MCF 10A (cell line): ENCODE measurements at regions of chr11 and their contacts with region 1.

Region 1: GRCh38 chr11:72179804-72180396 is 12.0 kb upstream of the FOLR1 start:
- DNase-seq: no peak
- H3K4me3 Mint-ChIP-seq: no peak overlapping the region
- H3K27ac Mint-ChIP-seq: peak overlapping the region; percentile 44
- H3K4me1 Mint-ChIP-seq: peaks cover 22% of the 10 kb centered on the region
- H3K27me3 Mint-ChIP-seq: no peaks in the 10 kb centered on the region
- CTCF ChIP-seq: no peak

Region 2: GRCh38 chr11:71977743-71978418 is 202.0 kb before region 1 on chr11:
- CTCF ChIA-PET with region 1: interaction called, 38 read pairs
- POLR2A ChIA-PET with region 1: no interaction called
- intact Hi-C with region 1: loop called (anchors 1 kb)
- DNase-seq: peak; percentile 66
- H3K4me3 Mint-ChIP-seq: no peak overlapping the region
- H3K27ac Mint-ChIP-seq: no peak overlapping the region
- H3K4me1 Mint-ChIP-seq: no peaks in the 10 kb centered on the region
- H3K27me3 Mint-ChIP-seq: no peaks in the 10 kb centered on the region
- CTCF ChIP-seq: peak; percentile 67

Region 3: DNA sequence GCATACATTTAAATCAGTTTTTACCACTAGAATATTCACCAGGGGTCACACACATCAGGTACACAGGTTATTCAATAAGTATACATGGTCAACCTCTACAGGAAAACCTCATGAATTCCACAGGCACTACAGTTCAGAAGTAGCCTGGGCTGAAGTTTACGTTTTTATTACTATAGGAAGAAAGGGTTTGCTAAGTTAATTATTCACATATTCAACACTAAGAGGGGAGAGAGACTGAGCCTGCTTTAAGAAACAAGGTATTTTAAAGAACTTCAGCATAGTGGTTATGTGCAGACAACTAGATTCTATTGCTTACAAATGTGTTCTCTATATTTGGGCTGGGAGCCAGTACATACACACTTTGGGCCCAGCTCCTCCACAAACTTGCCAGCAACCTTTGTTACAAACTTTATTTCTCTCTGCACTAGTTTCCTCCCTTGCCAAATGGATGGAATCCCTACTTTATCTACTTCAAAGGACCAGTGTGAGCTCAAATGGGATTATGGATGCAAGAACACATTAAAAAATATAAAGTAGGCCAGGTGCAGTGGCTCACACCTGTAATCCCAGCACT is 149.3 kb before region 1 on chr11:
- CTCF ChIA-PET with region 1: interaction called, 48 read pairs
- POLR2A ChIA-PET with region 1: interaction called, 14 read pairs
- intact Hi-C with region 1: loop called (anchors 1 kb)
- DNase-seq: no peak
- H3K4me3 Mint-ChIP-seq: no peak overlapping the region
- H3K27ac Mint-ChIP-seq: peak overlapping the region; percentile 27
- H3K4me1 Mint-ChIP-seq: peaks cover under 1% of the 10 kb centered on the region
- H3K27me3 Mint-ChIP-seq: no peaks in the 10 kb centered on the region
- CTCF ChIP-seq: no peak

Region 4: DNA sequence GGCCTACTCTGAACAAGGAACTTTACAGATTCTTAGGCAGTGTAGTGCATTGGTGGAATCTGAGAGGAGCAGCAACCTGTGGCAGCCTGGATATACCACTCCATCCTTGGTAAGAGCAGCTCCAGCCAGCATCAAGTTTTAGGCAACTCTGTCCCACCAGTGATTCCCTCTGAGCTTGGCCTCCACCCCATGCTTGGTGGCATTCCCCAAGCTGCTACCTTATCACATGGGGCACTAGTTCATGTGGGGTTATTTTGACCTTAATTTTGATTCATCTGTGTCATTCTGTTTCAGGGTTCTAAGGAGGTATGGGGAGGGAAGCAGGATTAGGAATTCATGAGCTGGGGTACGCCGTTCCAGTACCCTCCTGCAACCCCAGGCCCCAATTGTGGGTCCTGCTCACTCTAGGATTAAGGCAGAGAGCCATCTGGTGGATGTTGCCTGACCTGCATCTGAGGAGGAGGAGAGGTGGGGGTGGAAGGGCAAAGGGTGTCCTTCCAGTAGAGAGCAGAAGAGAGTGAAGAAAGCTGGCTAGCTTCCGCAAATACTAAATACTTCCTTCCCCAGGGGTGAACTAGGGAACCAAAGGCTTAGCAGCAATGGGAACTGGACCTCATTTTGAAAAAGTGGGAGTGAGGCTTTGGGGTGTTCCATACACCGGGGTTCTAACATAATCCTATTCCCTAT is 88.8 kb before region 1 on chr11:
- CTCF ChIA-PET with region 1: interaction called, 58 read pairs
- POLR2A ChIA-PET with region 1: interaction called, 3 read pairs
- intact Hi-C with region 1: loop called (anchors 1 kb)
- DNase-seq: peak; percentile 69
- H3K4me3 Mint-ChIP-seq: no peak overlapping the region
- H3K27ac Mint-ChIP-seq: peak overlapping the region; percentile 70
- H3K4me1 Mint-ChIP-seq: no peaks in the 10 kb centered on the region
- H3K27me3 Mint-ChIP-seq: no peaks in the 10 kb centered on the region
- CTCF ChIP-seq: peak; percentile 77

Region 5: DNA sequence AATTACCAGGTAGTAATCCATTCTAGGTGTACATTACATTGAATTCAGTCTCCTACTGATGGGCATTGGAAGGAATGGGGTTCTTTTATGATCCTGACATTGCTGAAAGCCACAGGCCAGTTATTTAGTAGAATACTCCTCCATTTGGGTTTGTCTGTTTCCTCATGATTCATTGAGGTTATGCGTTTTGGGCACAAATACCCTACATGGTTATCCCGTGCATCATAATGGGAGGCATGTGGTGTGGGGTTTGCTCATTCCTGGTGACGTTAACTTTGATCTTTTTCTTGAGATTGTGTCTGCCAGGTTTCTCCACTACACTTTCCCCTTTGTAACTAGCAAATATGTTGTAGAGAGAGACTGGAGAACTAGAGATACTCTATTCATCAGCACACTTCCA is 38.8 kb before region 1 on chr11:
- CTCF ChIA-PET with region 1: interaction called, 111 read pairs
- POLR2A ChIA-PET with region 1: interaction called, 100 read pairs
- intact Hi-C with region 1: loop called (anchors 2 kb)
- DNase-seq: peak; percentile 61
- H3K4me3 Mint-ChIP-seq: peak overlapping the region; percentile 29
- H3K27ac Mint-ChIP-seq: peak overlapping the region; percentile 87
- H3K4me1 Mint-ChIP-seq: peaks cover 30% of the 10 kb centered on the region
- H3K27me3 Mint-ChIP-seq: no peaks in the 10 kb centered on the region
- CTCF ChIP-seq: no peak

Region 6: GRCh38 chr11:72222907-72223614 is 43.2 kb after region 1 on chr11:
- CTCF ChIA-PET with region 1: interaction called, 11 read pairs
- POLR2A ChIA-PET with region 1: interaction called, 14 read pairs
- intact Hi-C with region 1: loop called (anchors 1 kb)
- DNase-seq: peak; percentile 94
- H3K4me3 Mint-ChIP-seq: peak overlapping the region; percentile 87
- H3K27ac Mint-ChIP-seq: peak overlapping the region; percentile 39
- H3K4me1 Mint-ChIP-seq: peaks cover 8% of the 10 kb centered on the region
- H3K27me3 Mint-ChIP-seq: peaks cover 5% of the 10 kb centered on the region
- CTCF ChIP-seq: no peak